CD4-positive, alpha-beta T cell (primary cell): ENCODE measurements at regions of chr12 and their contacts with region 1.

Region 1: GRCh38 chr12:47779301-47779942 is 6.4 kb downstream of the SLC48A1 start:
- DNase-seq: peak; percentile 85 to 98 (median 92)
- ATAC-seq: peak; percentile 99
- H3K4me3 ChIP-seq: no peak overlapping the region
- H3K4me3 Mint-ChIP-seq: peak overlapping the region; percentile 26
- H3K27ac ChIP-seq: no peak overlapping the region
- H3K27ac Mint-ChIP-seq: peak overlapping the region; percentile 61
- H3K4me1 ChIP-seq: peaks cover 27% of the 10 kb centered on the region
- H3K4me1 Mint-ChIP-seq: peaks cover 20% of the 10 kb centered on the region
- H3K27me3 ChIP-seq: no peaks in the 10 kb centered on the region
- H3K27me3 Mint-ChIP-seq: no peaks in the 10 kb centered on the region
- CTCF ChIP-seq: peak; percentile 86

Region 2: DNA sequence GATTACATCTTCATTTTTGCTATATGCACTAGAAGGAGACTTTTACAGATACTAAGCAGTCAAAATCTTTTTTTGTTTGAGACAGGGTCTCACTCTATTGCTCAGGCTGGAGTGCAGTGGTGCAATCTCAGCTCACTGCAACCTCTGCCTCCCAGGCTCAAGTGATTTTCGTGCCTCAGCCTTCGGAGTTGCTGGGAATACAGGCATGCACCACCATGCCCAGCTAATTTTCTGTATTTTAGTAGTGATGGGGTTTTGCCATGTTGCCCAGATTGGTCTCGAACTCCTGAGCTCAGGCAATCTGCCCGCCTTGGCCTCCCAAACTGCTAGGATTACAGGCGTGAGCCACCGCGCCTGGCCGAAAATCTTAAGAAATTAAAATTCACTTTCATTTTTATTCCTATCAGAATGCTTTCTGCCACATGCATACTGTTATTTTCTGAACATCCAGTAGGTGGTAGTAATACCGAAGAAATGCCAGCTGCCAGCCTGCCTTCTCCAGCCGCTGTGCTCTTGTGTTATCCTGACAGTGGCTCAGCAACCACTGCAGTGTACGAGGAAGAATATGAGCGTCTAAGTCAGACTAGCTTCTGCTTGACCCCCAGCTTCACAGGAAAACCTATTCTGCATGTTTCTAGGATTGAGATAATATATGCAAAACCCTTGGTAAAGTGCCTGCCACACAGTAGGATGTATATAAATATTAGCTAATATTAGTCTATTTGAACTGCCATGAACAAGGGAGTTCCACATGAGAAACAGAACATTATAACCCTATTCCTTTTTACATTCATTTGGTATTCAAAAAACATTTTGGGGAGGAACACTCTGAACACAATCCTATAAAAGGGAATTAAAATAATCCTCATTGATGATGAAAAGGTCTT is 127.8 kb before region 1 on chr12:
- CTCF ChIA-PET with region 1: interaction called, 4 read pairs
- POLR2A ChIA-PET with region 1: no interaction called
- intact Hi-C with region 1: loop called in 1 of 2 experiments (anchors 5 kb)
- DNase-seq: peak; percentile 19 to 80 (median 34)
- ATAC-seq: peak; percentile 97
- H3K4me3 ChIP-seq: peak overlapping the region; percentile 3
- H3K4me3 Mint-ChIP-seq: peak overlapping the region; percentile 43
- H3K27ac ChIP-seq: no peak overlapping the region
- H3K27ac Mint-ChIP-seq: no peak overlapping the region
- H3K4me1 ChIP-seq: peaks cover 9% of the 10 kb centered on the region
- H3K4me1 Mint-ChIP-seq: peaks cover 9% of the 10 kb centered on the region
- H3K27me3 ChIP-seq: no peaks in the 10 kb centered on the region
- H3K27me3 Mint-ChIP-seq: no peaks in the 10 kb centered on the region
- CTCF ChIP-seq: peak; percentile 72

Region 3: DNA sequence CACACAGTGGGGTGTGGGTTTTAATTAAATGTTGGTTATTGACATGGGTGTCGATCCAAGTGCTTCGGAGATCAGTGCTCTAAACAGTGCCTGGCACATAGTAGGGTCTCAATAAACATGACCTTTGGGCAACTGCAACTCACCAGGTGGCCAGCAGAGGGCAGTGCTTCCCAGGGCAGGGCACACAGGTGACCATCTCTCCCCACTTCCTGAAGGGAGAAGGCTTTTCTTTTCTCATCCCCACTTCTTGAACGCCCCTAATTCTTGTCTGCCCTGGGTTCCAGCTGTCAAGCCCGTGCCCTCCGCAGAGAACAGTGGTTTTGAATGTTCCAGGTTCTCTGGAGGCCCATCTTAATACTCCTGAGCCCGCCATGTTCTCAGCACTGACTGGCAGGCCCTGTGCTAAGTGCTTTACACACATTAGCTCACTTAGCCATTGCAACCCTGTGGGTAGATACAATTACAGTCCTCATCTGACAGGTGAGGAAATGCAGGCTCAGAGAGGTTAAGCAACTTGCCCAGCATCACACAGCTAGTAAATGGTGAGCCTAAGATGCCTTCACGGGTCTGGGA is 37.1 kb before region 1 on chr12:
- CTCF ChIA-PET with region 1: interaction called, 30 read pairs
- POLR2A ChIA-PET with region 1: interaction called, 6 read pairs
- intact Hi-C with region 1: loop called (anchors 1 kb)
- DNase-seq: peak; percentile 57 to 83 (median 68)
- ATAC-seq: peak; percentile 38
- H3K4me3 ChIP-seq: no peak overlapping the region
- H3K4me3 Mint-ChIP-seq: no peak overlapping the region
- H3K27ac ChIP-seq: no peak overlapping the region
- H3K27ac Mint-ChIP-seq: no peak overlapping the region
- H3K4me1 ChIP-seq: peaks cover 38% of the 10 kb centered on the region
- H3K4me1 Mint-ChIP-seq: peaks cover 42% of the 10 kb centered on the region
- H3K27me3 ChIP-seq: no peaks in the 10 kb centered on the region
- H3K27me3 Mint-ChIP-seq: no peaks in the 10 kb centered on the region
- CTCF ChIP-seq: peak; percentile 100

Region 4: DNA sequence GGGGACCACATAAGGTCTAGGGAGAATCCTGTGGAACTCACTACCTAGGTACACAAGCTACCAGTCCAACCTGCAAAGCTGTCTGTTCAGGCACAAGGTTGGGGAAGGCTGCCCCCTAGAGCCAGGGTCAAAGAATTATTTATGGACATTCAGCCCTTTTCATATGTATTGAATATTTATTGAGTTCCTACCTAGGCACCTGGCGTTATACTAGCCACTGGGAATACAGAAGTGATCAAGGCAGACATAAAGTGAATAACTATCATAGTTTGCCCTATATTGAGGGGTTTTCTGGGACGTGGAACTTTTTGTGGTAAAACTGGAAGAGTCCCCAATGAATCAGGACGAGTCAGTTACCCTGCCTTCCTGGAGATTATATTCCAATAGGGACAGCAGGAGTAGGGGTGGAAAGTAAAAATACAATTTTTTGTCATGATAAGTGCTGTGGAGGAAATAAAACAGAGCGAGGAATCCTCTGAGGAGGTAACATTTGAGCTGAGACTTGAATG is 12.2 kb before region 1 on chr12:
- CTCF ChIA-PET with region 1: interaction called, 31 read pairs
- POLR2A ChIA-PET with region 1: no interaction called
- intact Hi-C with region 1: no loop called
- DNase-seq: peak; percentile 48 to 86 (median 67)
- ATAC-seq: peak; percentile 80
- H3K4me3 ChIP-seq: no peak overlapping the region
- H3K4me3 Mint-ChIP-seq: no peak overlapping the region
- H3K27ac ChIP-seq: no peak overlapping the region
- H3K27ac Mint-ChIP-seq: no peak overlapping the region
- H3K4me1 ChIP-seq: peaks cover 9% of the 10 kb centered on the region
- H3K4me1 Mint-ChIP-seq: peaks cover 19% of the 10 kb centered on the region
- H3K27me3 ChIP-seq: no peaks in the 10 kb centered on the region
- H3K27me3 Mint-ChIP-seq: no peaks in the 10 kb centered on the region
- CTCF ChIP-seq: peak; percentile 31

Region 5: DNA sequence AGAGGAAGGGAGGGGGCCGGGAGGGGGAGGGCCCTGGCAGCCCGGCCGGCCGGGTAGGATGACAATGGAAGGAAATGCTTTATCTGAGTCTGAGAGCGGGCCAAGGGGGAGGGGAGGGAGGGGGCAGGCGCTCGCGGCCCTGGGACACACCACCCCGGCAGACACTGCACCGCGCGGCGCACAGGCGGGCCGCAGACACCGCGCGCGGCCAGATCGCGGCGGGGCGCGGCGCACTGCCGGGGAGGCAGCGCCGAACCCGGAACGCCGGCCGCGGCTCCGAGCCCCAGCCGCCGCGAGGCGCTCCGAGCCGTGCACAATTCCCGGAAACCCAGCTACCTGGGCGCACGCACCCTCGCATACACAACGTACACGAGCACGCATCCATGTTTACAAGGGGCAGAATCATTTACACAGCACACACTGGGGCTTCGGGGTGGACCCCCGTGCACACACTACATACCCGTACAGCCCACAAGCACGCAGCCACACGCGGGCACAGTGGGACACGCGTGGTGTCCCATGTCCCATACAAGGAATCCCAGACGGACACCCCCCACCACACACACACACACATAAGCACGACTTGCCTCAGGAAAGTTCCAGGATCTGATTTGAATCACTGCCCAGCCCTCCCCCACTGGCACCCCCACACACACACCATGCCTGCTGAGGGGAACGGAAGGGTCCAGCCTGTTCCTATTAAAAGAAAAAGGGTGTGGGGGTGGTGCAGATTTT is 40.6 kb after region 1 on chr12 and contains the start of gene HDAC7:
- CTCF ChIA-PET with region 1: interaction called, 6 read pairs
- POLR2A ChIA-PET with region 1: interaction called, 13 read pairs
- intact Hi-C with region 1: no loop called
- DNase-seq: peak in 13 of 14 experiments; percentile 62 to 90 (median 78)
- ATAC-seq: peak; percentile 59
- H3K4me3 ChIP-seq: peak within 1 kb of the TSS; percentile 89
- H3K4me3 Mint-ChIP-seq: peak within 1 kb of the TSS; percentile 98
- H3K27ac ChIP-seq: peak within 1 kb of the TSS; percentile 84 to 89
- H3K27ac Mint-ChIP-seq: peak within 1 kb of the TSS; percentile 96
- H3K4me1 ChIP-seq: peaks cover 81% of the 10 kb centered on the region
- H3K4me1 Mint-ChIP-seq: peaks cover 89% of the 10 kb centered on the region
- H3K27me3 ChIP-seq: no peaks in the 10 kb centered on the region
- H3K27me3 Mint-ChIP-seq: no peaks in the 10 kb centered on the region
- CTCF ChIP-seq: no peak
- total RNA-seq, gene HDAC7: 116 to 122 TPM

Region 6: DNA sequence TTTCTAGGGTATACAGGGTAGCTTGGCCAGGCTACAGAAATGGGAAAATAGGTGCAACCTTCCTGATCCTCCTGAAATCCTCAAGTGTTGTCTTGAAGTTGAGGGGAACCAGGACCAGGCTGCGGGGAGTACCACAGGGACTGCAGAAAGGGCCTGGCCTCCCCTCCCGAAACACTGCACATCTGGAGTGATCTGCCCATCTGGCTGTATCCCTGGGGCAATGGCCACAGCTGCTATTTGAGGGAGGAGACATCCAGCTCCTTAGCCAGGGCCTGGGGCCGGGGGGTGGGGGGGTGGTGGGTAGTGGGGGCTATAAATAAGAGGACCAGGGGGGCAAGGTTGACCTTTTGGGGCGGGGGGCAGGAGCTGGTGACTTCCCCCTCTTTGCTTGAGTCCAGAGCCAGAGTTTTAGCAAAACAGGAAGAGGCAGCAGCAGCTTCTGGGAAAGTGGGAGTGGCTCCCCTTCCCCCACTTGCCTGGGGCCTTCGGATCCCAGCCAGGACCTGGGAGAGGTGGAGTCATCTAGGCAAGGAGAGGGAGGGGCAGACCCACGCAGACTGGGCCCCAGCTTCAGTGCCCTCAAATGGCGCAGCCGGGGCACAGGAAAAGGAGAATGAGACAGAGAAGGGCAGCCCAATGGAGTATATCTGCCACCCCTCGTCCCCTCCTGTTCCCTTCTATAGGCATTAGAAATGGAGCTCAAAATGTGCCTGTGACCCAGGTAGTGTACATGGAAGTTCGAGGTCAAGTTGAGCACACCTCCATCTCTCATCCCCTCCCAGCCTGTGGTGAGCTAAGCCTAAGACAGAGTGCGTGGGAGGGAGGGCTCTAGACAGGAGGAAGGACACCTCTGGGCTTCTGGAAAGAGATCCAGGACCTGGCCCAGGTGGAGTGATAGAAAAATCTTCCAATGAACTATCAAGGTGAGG is 49.5 kb after region 1 on chr12:
- CTCF ChIA-PET with region 1: interaction called, 15 read pairs
- POLR2A ChIA-PET with region 1: interaction called, 4 read pairs
- intact Hi-C with region 1: no loop called
- DNase-seq: peak in 2 of 14 experiments; percentile 24 to 45
- ATAC-seq: no peak
- H3K4me3 ChIP-seq: no peak overlapping the region
- H3K4me3 Mint-ChIP-seq: peak overlapping the region; percentile 27
- H3K27ac ChIP-seq: no peak overlapping the region
- H3K27ac Mint-ChIP-seq: peak overlapping the region; percentile 81
- H3K4me1 ChIP-seq: peaks cover 99% of the 10 kb centered on the region
- H3K4me1 Mint-ChIP-seq: peaks cover 92% of the 10 kb centered on the region
- H3K27me3 ChIP-seq: no peaks in the 10 kb centered on the region
- H3K27me3 Mint-ChIP-seq: no peaks in the 10 kb centered on the region
- CTCF ChIP-seq: no peak

Region 7: DNA sequence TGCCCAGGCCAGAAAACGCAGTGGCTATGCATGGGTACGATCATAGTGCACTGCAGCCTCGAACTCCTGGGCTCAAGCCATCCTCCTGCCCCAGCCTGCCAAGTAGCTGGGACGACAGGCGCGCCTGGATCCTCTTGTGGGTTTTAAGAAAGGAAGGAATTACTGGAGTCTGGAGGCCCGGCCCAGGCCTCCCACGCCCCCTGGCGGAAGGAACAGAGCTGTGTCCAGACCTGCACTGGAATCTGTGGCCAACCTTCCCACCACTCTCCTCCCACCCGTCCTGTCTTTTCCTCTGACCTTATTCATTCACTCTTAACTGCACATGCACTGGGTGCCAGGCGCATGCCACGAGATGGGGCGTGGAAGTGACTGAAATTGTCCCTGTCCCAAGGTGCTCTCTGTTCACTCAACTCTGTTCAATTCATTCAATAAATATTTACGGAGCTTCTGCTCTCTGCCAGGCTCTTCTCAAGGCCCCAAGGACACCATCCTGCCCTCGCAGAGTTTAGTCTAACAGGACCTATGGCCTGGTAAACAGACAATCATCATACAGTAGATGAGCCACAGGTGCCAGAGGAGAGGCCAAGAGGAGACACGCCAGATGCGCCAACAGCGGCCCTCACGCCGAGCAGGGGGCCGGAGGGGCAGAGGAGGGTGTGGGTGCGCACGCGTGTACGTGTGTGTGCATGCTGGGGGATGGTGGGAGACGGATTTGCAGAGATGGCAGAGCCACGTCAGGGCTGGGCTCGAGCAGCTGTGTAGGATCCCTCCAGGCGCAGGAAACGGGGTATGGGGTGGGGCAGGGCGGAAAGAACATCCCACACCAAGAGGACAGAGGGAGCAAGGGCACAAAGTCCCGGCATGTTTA is 170.3 kb after region 1 on chr12:
- CTCF ChIA-PET with region 1: no interaction called
- POLR2A ChIA-PET with region 1: no interaction called
- intact Hi-C with region 1: loop called in 1 of 2 experiments (anchors 5 kb)
- DNase-seq: peak; percentile 11 to 72 (median 38)
- ATAC-seq: peak; percentile 73
- H3K4me3 ChIP-seq: no peak overlapping the region
- H3K4me3 Mint-ChIP-seq: no peak overlapping the region
- H3K27ac ChIP-seq: no peak overlapping the region
- H3K27ac Mint-ChIP-seq: no peak overlapping the region
- H3K4me1 ChIP-seq: peaks cover 5% of the 10 kb centered on the region
- H3K4me1 Mint-ChIP-seq: no peaks in the 10 kb centered on the region
- H3K27me3 ChIP-seq: no peaks in the 10 kb centered on the region
- H3K27me3 Mint-ChIP-seq: peaks cover 4% of the 10 kb centered on the region
- CTCF ChIP-seq: peak; percentile 74

Region 8: DNA sequence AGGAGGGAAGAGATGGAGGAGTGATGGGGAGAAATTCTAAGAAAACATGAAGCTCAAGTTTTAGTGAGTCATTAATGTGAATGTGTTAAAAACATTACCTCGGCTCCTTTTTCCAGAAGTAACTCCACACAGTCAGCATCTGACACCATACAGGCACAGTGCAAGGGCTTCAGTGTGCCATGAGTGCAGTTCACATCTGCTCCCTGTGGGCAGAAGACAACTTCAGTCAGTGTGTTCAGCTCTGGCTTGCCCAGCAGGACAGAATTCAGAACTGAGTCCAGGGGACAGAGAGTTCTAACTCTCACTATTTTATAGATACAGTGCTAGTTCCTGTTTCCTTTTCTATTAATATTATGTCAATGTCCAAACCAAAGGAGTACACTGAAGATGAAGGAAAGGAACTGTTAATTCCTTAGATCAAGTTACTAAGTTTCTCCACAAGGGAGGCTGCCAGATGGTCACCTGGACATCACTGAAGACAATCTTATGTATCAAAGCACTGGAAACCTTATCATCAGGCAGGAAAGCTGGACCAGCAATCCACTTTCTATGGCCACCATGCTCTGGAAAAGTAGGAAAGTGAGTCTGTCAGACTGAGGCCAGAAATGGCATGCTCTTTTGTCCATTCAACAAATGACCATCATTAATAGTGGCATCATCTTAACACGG is 371.8 kb after region 1 on chr12:
- CTCF ChIA-PET with region 1: no interaction called
- POLR2A ChIA-PET with region 1: no interaction called
- intact Hi-C with region 1: no loop called
- DNase-seq: no peak
- ATAC-seq: no peak
- H3K4me3 ChIP-seq: no peak overlapping the region
- H3K4me3 Mint-ChIP-seq: no peak overlapping the region
- H3K27ac ChIP-seq: no peak overlapping the region
- H3K27ac Mint-ChIP-seq: no peak overlapping the region
- H3K4me1 ChIP-seq: peaks cover 1% of the 10 kb centered on the region
- H3K4me1 Mint-ChIP-seq: peaks cover 23% of the 10 kb centered on the region
- H3K27me3 ChIP-seq: no peaks in the 10 kb centered on the region
- H3K27me3 Mint-ChIP-seq: no peaks in the 10 kb centered on the region
- CTCF ChIP-seq: no peak